ENCODE measurements at regions of chr4 and their contacts with region 1.

Region 1: DNA sequence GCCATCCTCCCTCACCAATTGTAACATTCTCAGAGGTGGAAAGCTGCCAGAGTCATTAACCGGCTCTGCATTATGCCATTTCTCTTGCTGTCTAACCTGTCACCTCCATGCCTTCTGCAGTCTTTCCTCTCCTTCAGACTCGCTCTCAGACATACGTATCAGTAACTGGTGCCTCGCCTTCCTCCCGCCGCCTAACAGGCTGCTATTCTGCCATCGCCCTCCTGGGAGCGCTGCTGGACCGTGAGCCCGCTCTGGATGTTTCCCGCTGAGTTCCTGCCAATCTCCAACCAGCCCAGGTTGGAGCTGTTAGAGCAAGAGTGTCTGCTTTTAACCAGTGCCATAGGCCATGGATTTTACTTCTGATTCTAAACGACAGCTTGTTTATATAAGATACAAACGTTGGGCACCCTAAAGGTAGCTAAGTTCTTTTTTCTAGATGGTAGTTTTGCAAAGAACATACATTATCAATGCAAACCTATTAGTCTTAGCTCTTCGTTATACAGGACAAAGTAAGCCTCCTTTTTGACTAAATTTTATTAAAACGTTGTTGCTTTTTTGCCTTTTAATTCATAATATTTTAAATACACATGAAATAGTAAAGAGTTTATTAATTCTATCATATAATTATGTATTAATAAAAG is 59.5 kb upstream of the NEIL3 start:
- DNase-seq: peak; percentile 66
- H3K4me3 Mint-ChIP-seq: no peak overlapping the region
- H3K27ac Mint-ChIP-seq: no peak overlapping the region
- H3K4me1 Mint-ChIP-seq: peaks cover 15% of the 10 kb centered on the region
- H3K27me3 Mint-ChIP-seq: peaks cover 15% of the 10 kb centered on the region

Region 2: DNA sequence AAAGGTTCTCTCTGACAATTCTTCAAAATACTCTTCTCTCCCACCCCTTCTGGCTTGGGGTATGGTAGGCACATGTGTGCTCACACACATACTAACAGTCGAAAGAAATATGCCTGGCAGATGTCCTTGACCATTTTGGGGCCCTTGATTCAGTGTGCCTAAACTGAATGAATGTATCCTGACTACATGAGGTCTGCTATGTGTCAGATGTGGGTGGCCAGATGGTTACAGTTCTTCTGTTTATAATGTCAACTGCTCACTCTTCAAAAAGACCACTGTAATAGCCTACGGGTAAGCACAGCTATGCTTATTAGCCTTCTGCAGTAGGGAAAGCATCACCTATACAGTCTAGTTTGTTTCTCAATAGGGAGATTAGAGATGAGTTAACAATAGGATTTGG is 393.8 kb before region 1 on chr4:
- intact Hi-C with region 1: no loop called
- DNase-seq: no peak
- H3K4me3 Mint-ChIP-seq: no peak overlapping the region
- H3K27ac Mint-ChIP-seq: no peak overlapping the region
- H3K4me1 Mint-ChIP-seq: no peaks in the 10 kb centered on the region
- H3K27me3 Mint-ChIP-seq: no peaks in the 10 kb centered on the region

Region 3: GRCh38 chr4:177393236-177393635 is 143.1 kb after region 1 on chr4:
- intact Hi-C with region 1: loop called (anchors 2 kb)
- DNase-seq: peak; percentile 17
- H3K4me3 Mint-ChIP-seq: no peak overlapping the region
- H3K27ac Mint-ChIP-seq: no peak overlapping the region
- H3K4me1 Mint-ChIP-seq: peaks cover 24% of the 10 kb centered on the region
- H3K27me3 Mint-ChIP-seq: peaks cover 4% of the 10 kb centered on the region

Region 4: GRCh38 chr4:177546745-177547144 is 296.6 kb after region 1 on chr4:
- intact Hi-C with region 1: loop called (anchors 1 kb)
- DNase-seq: no peak
- H3K4me3 Mint-ChIP-seq: no peak overlapping the region
- H3K27ac Mint-ChIP-seq: no peak overlapping the region
- H3K4me1 Mint-ChIP-seq: no peaks in the 10 kb centered on the region
- H3K27me3 Mint-ChIP-seq: no peaks in the 10 kb centered on the region

Region 5: GRCh38 chr4:177555007-177555574 is 304.9 kb after region 1 on chr4:
- intact Hi-C with region 1: loop called (anchors 1 kb)
- DNase-seq: no peak
- H3K4me3 Mint-ChIP-seq: no peak overlapping the region
- H3K27ac Mint-ChIP-seq: no peak overlapping the region
- H3K4me1 Mint-ChIP-seq: no peaks in the 10 kb centered on the region
- H3K27me3 Mint-ChIP-seq: no peaks in the 10 kb centered on the region

Measured in activated T-helper 1 cell treated with anti-CD3 and anti-CD28 coated beads, Interleukin-12 subunit alpha, Interleukin-12 subunit beta, Interleukin-2, Interleukin-4 antibody, amounts not matched to agents 30 ng/mL and 10 ng/mL and 1 ng/mL, durations not matched to agents 14 hours and 24 hours and 36 hours (primary cell).